ENCODE measurements at regions of chr11 and their contacts with region 1.

Region 1: DNA sequence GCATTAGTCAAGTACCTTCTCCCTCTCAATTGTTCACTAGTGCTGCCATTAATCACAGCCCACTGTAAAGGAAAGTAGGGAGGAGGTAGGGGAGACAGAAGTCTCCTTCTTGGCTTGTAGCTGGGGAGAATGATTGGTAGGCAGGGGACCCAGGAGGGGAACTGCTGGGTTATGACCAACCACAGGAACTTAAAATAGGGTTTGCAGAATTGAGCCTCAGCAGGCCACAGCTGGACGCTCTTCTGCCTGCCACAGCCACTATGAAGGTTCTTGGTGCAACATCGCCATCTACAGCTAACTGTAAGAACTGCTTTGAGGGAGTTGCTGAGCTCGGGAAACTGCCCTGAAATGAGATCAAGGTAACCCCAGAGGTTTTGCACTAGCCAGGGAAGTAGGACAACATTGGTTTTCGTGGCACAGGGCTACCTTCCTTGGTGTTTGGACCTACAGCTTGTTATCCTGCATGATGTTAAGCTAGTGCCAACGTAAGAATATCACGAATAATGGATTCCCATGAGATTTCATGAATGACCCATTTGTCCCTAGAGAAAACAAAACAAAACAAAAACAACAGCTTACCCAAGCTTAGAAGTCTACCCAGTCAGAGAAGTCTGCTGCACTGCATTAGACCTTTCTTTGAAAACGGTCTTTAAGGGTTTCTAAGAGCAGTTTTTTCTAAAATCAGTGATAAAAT is 787.1 kb upstream of the API5 start:
- DNase-seq: peak; percentile 46 to 51
- H3K4me3 ChIP-seq: no peak overlapping the region
- H3K27ac ChIP-seq: no peak overlapping the region
- H3K4me1 ChIP-seq: no peaks in the 10 kb centered on the region
- H3K27me3 ChIP-seq: no peaks in the 10 kb centered on the region
- CTCF ChIP-seq: peak; percentile 87

Region 2: DNA sequence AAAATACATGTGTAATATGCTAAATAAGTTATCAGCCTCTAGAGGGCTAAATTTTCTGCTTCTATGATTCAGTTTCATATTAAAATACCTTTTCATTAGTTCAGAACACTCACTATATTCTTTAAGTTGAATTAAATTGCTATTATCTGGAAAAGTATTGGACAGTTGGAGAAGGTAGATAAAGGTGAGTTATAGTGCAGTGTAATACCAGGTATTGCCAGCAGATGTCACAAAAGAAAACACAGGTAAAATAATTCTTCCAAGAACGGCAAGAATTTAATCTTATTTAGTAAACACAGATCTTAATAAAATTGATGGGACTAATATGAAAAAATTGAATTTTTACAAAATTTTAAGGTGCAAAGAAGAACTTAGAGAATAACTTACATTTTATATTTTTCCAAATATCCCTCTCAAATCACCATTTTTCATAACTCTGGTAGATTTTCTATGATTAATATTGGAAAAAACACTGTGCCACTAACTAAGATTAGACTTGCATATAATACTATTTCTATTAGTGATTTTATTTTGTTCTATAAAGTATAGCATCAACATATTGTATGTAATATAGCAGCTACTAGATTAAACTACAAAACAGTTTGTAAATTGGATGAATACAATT is 1063.5 kb before region 1 on chr11:
- CTCF ChIA-PET with region 1: no interaction called
- POLR2A ChIA-PET with region 1: no interaction called
- intact Hi-C with region 1: loop called (anchors 2 kb)
- DNase-seq: no peak
- H3K4me3 ChIP-seq: no peak overlapping the region
- H3K27ac ChIP-seq: no peak overlapping the region
- H3K4me1 ChIP-seq: no peaks in the 10 kb centered on the region
- H3K27me3 ChIP-seq: peaks cover 11% of the 10 kb centered on the region
- CTCF ChIP-seq: peak; percentile 90

Region 3: GRCh38 chr11:41498726-41499125 is 1026.0 kb before region 1 on chr11:
- CTCF ChIA-PET with region 1: no interaction called
- POLR2A ChIA-PET with region 1: no interaction called
- intact Hi-C with region 1: loop called (anchors 2 kb)
- DNase-seq: no peak
- H3K4me3 ChIP-seq: no peak overlapping the region
- H3K27ac ChIP-seq: no peak overlapping the region
- H3K4me1 ChIP-seq: no peaks in the 10 kb centered on the region
- H3K27me3 ChIP-seq: no peaks in the 10 kb centered on the region
- CTCF ChIP-seq: peak; percentile 68

Measured in PC-9 (cell line).